HEK293 (cell line): ENCODE measurements at regions of chr15 and their contacts with region 1.

Region 1: DNA sequence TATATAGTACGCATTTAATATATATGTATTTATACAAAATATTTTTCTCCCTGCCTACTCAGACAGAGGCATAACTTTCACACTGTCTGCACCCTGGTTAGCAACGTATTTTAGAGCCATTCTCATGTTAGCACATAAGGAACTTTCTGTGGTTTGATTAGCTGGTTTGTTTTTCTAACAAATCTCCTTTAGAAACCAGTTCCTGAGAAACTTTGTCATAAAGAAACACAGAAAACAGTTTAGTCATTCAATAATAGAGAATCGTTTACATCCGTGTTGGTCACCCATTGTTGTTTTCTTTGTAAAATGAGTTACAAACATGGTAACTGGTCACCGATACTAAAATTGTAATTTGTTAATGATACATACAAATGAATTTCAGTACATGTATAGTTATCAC is 5.9 kb upstream of the NGRN start:
- H3K4me3 ChIP-seq: no peak overlapping the region
- H3K27ac ChIP-seq: no peak overlapping the region
- H3K4me1 ChIP-seq: no peaks in the 10 kb centered on the region
- CTCF ChIP-seq: no peak

Region 2: GRCh38 chr15:90249203-90249863 is 10.2 kb before region 1 on chr15 and contains the start of gene TTLL13:
- CTCF ChIA-PET with region 1: no interaction called
- POLR2A ChIA-PET with region 1: interaction called, 12 read pairs
- H3K4me3 ChIP-seq: peak within 1 kb of the TSS; percentile 73
- H3K27ac ChIP-seq: no peak within 1 kb of the TSS
- H3K4me1 ChIP-seq: no peaks in the 10 kb centered on the region; the same call in 1 of the 2 replicates
- CTCF ChIP-seq: peak; percentile 60

Region 3: DNA sequence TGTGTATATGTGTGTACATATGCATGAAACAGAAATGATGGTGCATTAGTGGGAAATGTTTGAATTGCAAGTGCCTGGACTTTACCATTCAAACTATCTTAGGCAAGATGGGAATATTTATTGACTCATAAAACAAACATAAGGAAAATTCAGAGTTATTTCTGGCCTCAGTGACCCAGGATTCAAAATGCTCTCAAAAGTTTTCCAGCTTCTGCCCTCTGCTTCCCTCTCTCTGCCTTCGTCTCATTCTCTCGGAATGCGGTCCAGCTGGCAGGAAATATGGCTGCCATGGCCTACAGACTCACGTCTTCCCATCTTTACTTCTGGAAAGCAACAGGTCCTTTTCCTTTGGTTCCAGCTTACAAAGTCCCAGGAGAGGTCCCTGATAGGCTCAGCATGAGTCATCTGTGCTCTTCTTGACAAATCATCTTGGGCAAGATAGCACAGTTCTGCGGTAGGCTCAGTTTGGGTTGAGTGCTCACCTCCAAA is 83.8 kb after region 1 on chr15:
- CTCF ChIA-PET with region 1: no interaction called
- POLR2A ChIA-PET with region 1: no interaction called
- H3K4me3 ChIP-seq: no peak overlapping the region
- H3K27ac ChIP-seq: no peak overlapping the region
- H3K4me1 ChIP-seq: peaks cover 4% of the 10 kb centered on the region; the same call in 1 of the 2 replicates
- CTCF ChIP-seq: no peak